ENCODE measurements at regions of chr10 and their contacts with region 1.

Region 1: GRCh38 chr10:29496341-29497162 is 138.2 kb downstream of the SVIL start:
- DNase-seq: peak; percentile 84
- H3K4me3 ChIP-seq: no peak overlapping the region; a peak in 1 of 4 replicates
- H3K27ac ChIP-seq: peak overlapping the region in 1 of 2 experiments; percentile 21; a peak in 1 of 4 replicates
- H3K4me1 ChIP-seq: peaks cover 0 to 7% of the 10 kb centered on the region in 2 experiments; a peak in 2 of 4 replicates
- H3K27me3 ChIP-seq: no peaks in the 10 kb centered on the region
- CTCF ChIP-seq: peak; percentile 99
- EP300 ChIP-seq: no peak
- RAD21 ChIP-seq: peak; percentile 84

Region 2: GRCh38 chr10:29386342-29386999 is 110.1 kb before region 1 on chr10:
- CTCF ChIA-PET with region 1: interaction called, 24 read pairs
- POLR2A ChIA-PET with region 1: no interaction called
- DNase-seq: peak; percentile 56
- H3K4me3 ChIP-seq: peak overlapping the region in 1 of 2 experiments; percentile 18; a peak in 1 of 4 replicates
- H3K27ac ChIP-seq: no peak overlapping the region
- H3K4me1 ChIP-seq: no peaks in the 10 kb centered on the region; a peak in 1 of 4 replicates
- H3K27me3 ChIP-seq: peaks cover 9% of the 10 kb centered on the region
- CTCF ChIP-seq: peak; percentile 82
- EP300 ChIP-seq: no peak
- RAD21 ChIP-seq: peak; percentile 57

Region 3: DNA sequence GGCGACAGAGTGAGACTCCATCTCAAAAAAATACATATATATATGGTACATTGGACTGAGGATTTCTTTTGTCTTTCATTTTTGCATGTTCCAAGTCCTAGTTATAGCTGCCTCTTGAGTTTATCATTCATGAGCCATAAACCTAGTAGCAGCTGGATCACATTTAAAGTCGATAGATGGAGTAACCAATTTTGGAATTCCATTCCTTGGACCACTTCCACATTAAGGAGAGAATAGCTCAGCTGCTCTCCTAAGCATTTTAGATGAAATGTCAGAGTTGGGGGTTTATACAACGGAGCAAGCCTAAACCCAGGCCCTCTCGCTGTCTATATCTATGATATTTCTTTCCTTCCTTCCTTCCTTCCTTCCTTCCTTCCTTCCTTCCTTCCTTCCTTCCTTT is 66.5 kb before region 1 on chr10:
- CTCF ChIA-PET with region 1: interaction called, 17 read pairs
- POLR2A ChIA-PET with region 1: no interaction called
- DNase-seq: no peak
- H3K4me3 ChIP-seq: no peak overlapping the region
- H3K27ac ChIP-seq: no peak overlapping the region
- H3K4me1 ChIP-seq: peaks cover 2 to 10% of the 10 kb centered on the region in 2 experiments; a peak in 2 of 4 replicates
- H3K27me3 ChIP-seq: no peaks in the 10 kb centered on the region
- CTCF ChIP-seq: no peak
- EP300 ChIP-seq: no peak
- RAD21 ChIP-seq: no peak

Region 4: GRCh38 chr10:29470355-29470705 is 26.2 kb before region 1 on chr10:
- CTCF ChIA-PET with region 1: interaction called, 15 read pairs
- POLR2A ChIA-PET with region 1: no interaction called
- DNase-seq: peak; percentile 52
- H3K4me3 ChIP-seq: no peak overlapping the region; a peak in 1 of 4 replicates
- H3K27ac ChIP-seq: no peak overlapping the region
- H3K4me1 ChIP-seq: peaks cover 3 to 18% of the 10 kb centered on the region in 2 experiments; a peak in 3 of 4 replicates
- H3K27me3 ChIP-seq: no peaks in the 10 kb centered on the region
- CTCF ChIP-seq: peak; percentile 51
- EP300 ChIP-seq: no peak
- RAD21 ChIP-seq: peak; percentile 14; the same call in 1 of the 2 replicates

Region 5: DNA sequence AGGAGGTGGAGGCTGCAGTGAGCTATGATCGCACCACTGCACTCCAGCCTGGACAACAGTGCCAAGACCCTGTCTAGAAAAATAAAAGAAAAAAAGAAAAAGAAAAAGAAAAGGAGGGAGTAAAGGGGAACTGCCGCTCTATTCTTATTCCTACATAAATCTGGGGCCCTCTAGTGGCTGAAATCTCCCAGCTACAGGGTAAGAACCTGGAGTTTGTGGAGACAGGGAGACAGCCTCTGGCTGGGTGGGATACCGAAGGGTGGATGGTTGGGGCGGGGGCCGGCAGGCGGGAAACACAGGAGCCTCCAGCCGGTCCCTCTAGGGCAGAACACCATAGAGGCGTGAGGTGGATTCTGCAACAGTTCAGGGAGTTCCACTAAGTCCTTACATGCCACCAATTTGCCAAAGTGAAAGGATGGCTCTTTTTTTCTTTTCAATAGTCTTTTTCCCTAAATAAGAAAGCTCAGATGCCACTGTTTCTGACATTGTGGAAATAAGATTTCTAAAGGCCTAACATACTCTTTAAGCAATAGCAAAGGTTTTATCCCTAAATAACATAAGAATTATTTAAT is 20.9 kb after region 1 on chr10:
- CTCF ChIA-PET with region 1: interaction called, 26 read pairs
- POLR2A ChIA-PET with region 1: no interaction called
- DNase-seq: peak; percentile 71
- H3K4me3 ChIP-seq: no peak overlapping the region
- H3K27ac ChIP-seq: no peak overlapping the region
- H3K4me1 ChIP-seq: peaks cover 0 to 3% of the 10 kb centered on the region in 2 experiments; a peak in 1 of 4 replicates
- H3K27me3 ChIP-seq: no peaks in the 10 kb centered on the region
- CTCF ChIP-seq: peak; percentile 71
- EP300 ChIP-seq: no peak
- RAD21 ChIP-seq: peak; percentile 21

Region 6: GRCh38 chr10:29735596-29736318 is 239.2 kb after region 1 on chr10:
- CTCF ChIA-PET with region 1: no interaction called
- POLR2A ChIA-PET with region 1: no interaction called
- DNase-seq: peak; percentile 97
- H3K4me3 ChIP-seq: peak overlapping the region; percentile 81 to 89
- H3K27ac ChIP-seq: peak overlapping the region; percentile 79 to 86
- H3K4me1 ChIP-seq: peaks cover 12 to 15% of the 10 kb centered on the region in 2 experiments; a peak in 1 of 4 replicates
- H3K27me3 ChIP-seq: no peaks in the 10 kb centered on the region
- CTCF ChIP-seq: peak; percentile 85
- EP300 ChIP-seq: peak in 1 of 2 experiments; percentile 42; a peak in 1 of 4 replicates
- RAD21 ChIP-seq: peak; percentile 61